ENCODE measurements at regions of chr22 and their contacts with region 1.

Region 1: DNA sequence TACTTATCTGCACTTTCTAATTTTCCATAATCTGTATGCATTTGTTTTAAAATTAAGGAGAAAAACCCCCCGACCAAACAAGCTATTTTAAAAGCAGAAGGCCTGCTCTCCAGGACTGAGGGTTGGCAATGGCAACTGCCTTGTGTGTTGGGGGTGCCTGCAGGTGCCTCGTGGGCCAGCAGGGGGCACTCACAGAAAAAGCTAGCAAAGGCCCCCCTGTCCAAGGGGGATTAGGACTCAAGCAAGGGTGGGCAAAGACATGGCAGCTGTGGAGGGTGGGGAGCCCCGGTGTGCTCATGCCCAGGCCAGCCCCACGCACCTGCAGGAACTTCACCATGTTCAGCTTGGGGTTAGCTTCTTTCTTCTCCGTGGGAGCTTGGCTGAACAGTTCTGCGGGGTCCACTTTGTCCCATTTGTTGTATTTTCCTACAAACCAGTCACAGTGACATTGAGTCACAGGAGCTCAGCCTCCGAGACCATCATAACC is 10.3 kb downstream of the TOP3B start:
- DNase-seq: peak; percentile 88
- H3K4me3 ChIP-seq: peak overlapping the region in 1 of 2 experiments; percentile 42; a peak in 1 of 4 replicates
- H3K27ac ChIP-seq: no peak overlapping the region
- H3K4me1 ChIP-seq: no peaks in the 10 kb centered on the region
- H3K27me3 ChIP-seq: no peaks in the 10 kb centered on the region
- CTCF ChIP-seq: peak; percentile 92
- EP300 ChIP-seq: no peak
- RAD21 ChIP-seq: peak; percentile 45

Region 2: DNA sequence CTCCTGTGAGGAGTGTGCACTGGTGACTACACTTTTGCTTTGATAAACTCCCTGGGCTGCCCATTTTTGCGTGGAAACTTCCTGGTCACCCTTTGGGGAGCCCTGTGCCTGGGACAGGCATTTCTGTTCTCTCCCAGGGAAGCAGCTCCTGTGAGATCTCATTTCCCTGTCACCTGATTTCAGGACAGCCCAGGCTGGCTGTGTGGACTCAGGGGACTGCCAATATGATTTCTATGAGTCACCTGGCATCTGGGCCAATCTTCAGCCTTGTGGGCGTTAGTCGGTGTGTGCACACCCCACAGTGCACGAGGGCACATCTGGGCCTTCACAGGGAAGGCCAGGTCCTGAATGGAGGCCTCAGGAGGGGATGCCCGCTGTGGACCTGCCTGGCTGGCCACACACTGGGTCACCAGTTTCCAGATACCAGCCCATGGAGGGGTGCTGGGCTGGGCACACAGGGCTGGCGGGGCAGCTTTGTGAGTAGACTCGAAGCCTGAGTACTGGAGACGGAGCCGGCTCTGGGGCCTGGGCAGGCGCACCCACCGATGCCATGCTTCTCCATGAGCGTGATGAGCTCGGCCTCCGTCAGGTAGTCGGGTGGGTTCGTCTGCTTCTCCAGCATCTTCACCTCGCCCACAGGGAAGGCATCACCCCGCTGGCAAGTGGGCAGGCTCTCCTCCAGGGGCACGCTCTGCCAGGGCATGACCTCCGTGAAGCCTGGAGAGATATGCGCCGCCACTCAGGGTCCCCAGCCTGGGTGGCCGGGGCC is 10.3 kb before region 1 on chr22:
- CTCF ChIA-PET with region 1: interaction called, 16 read pairs
- POLR2A ChIA-PET with region 1: no interaction called
- DNase-seq: no peak
- H3K4me3 ChIP-seq: no peak overlapping the region
- H3K27ac ChIP-seq: no peak overlapping the region
- H3K4me1 ChIP-seq: no peaks in the 10 kb centered on the region
- H3K27me3 ChIP-seq: no peaks in the 10 kb centered on the region
- CTCF ChIP-seq: no peak
- EP300 ChIP-seq: no peak
- RAD21 ChIP-seq: no peak

Region 3: GRCh38 chr22:21982338-21982965 is 10.1 kb after region 1 on chr22 and contains the start of gene TOP3B:
- CTCF ChIA-PET with region 1: interaction called, 48 read pairs
- POLR2A ChIA-PET with region 1: interaction called, 3 read pairs
- DNase-seq: peak; percentile 92
- H3K4me3 ChIP-seq: peak within 1 kb of the TSS; percentile 70 to 99
- H3K27ac ChIP-seq: peak within 1 kb of the TSS in 1 of 2 experiments; percentile 56; a peak in 1 of 4 replicates
- H3K4me1 ChIP-seq: peaks cover 7 to 8% of the 10 kb centered on the region in 2 experiments; a peak in 1 of 4 replicates
- H3K27me3 ChIP-seq: no peaks in the 10 kb centered on the region
- CTCF ChIP-seq: no peak
- EP300 ChIP-seq: peak in 1 of 2 experiments; percentile 36; a peak in 1 of 4 replicates
- RAD21 ChIP-seq: no peak
- polyA plus RNA-seq, gene TOP3B: 14.4 and 17.4 TPM in 2 replicates

Region 4: GRCh38 chr22:21990445-21991303 is 18.3 kb after region 1 on chr22:
- CTCF ChIA-PET with region 1: interaction called, 24 read pairs
- POLR2A ChIA-PET with region 1: no interaction called
- DNase-seq: no peak
- H3K4me3 ChIP-seq: no peak overlapping the region
- H3K27ac ChIP-seq: no peak overlapping the region
- H3K4me1 ChIP-seq: peaks cover 0 to 5% of the 10 kb centered on the region in 2 experiments; a peak in 1 of 4 replicates
- H3K27me3 ChIP-seq: peaks cover 18% of the 10 kb centered on the region
- CTCF ChIP-seq: no peak
- EP300 ChIP-seq: no peak
- RAD21 ChIP-seq: no peak

Region 5: DNA sequence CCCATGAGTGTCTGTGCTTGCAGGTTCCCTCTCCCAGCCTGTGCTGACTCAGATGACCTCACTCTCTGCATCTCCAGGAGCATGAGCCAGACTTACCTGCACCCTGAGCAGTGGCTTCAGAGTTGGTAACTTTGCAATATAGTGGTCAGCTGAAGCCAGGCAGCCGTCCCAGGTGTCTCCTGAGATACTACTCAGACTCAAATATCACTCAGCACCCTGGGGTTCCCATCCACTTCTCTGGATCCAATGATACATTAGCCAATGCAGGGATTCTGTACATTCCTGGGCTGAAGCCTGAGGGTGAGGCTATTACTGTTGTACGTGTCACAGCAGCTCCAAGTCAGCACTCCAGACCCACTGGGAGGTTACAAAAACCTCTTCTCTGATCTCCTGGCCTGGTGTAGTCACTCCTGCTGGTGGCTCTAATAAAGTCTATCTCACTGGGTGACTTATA is 98.1 kb after region 1 on chr22:
- CTCF ChIA-PET with region 1: no interaction called
- POLR2A ChIA-PET with region 1: no interaction called
- DNase-seq: no peak
- H3K4me3 ChIP-seq: no peak overlapping the region
- H3K27ac ChIP-seq: no peak overlapping the region
- H3K4me1 ChIP-seq: no peaks in the 10 kb centered on the region
- H3K27me3 ChIP-seq: peaks cover 8% of the 10 kb centered on the region; the same call in 1 of the 2 replicates
- CTCF ChIP-seq: no peak
- EP300 ChIP-seq: no peak
- RAD21 ChIP-seq: no peak

Region 6: DNA sequence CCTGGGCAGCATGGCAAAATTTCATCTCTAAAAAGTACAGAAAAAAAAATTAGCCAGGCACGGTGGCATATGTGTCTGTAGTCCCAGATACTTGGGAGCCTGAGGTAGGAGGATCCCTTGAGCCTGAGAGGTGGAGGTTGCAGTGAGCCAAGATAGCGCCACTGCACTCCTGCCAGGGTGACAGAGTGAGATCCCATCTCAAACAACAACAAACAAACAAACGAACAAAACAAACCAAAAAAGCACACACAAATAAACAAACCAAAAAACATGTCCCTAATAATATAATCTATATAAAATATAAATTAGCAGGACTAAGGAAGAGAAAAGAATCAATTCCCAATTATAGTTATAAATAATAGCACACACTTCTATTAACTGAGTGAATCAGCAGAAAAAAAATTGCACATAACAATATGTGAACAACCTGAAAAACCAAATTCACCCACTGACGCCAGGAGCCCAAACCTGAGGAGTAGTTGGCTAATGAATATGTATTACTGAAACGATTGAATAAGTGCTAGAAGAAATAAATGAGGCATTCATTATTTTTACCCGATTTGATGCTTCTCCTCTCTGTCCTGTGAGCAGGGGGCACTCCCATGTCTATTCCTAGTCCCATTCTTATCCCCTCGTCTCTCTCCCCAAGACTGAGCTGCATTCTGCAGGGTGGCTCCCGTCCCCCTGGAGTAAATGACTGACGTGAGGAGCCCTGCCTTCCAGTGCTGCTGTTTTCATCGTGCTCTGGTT is 118.5 kb after region 1 on chr22:
- CTCF ChIA-PET with region 1: no interaction called
- POLR2A ChIA-PET with region 1: no interaction called
- DNase-seq: no peak
- H3K4me3 ChIP-seq: no peak overlapping the region
- H3K27ac ChIP-seq: no peak overlapping the region
- H3K4me1 ChIP-seq: peaks cover 0 to 5% of the 10 kb centered on the region in 2 experiments; a peak in 1 of 4 replicates
- H3K27me3 ChIP-seq: peaks cover 39% of the 10 kb centered on the region
- CTCF ChIP-seq: no peak
- EP300 ChIP-seq: no peak
- RAD21 ChIP-seq: no peak